Endothelial cell of umbilical vein (primary cell): ENCODE measurements at regions of chr3 and their contacts with region 1.

Region 1: GRCh38 chr3:25252291-25252690 is 175.8 kb upstream of the RARB start:
- DNase-seq: no peak
- H3K4me3 ChIP-seq: no peak overlapping the region
- H3K27ac ChIP-seq: no peak overlapping the region
- H3K4me1 ChIP-seq: no peaks in the 10 kb centered on the region
- H3K27me3 ChIP-seq: no peaks in the 10 kb centered on the region
- CTCF ChIP-seq: no peak
- POLR2A ChIP-seq: no peak

Region 2: GRCh38 chr3:25297667-25298585 is 45.6 kb after region 1 on chr3:
- CTCF ChIA-PET with region 1: no interaction called
- POLR2A ChIA-PET with region 1: no interaction called
- dilution Hi-C with region 1: no loop called
- intact Hi-C with region 1: loop called (anchors 1 kb)
- DNase-seq: peak; percentile 37
- H3K4me3 ChIP-seq: no peak overlapping the region
- H3K27ac ChIP-seq: no peak overlapping the region
- H3K4me1 ChIP-seq: no peaks in the 10 kb centered on the region
- H3K27me3 ChIP-seq: no peaks in the 10 kb centered on the region
- CTCF ChIP-seq: no peak
- POLR2A ChIP-seq: no peak